ENCODE measurements at regions of chr3 and their contacts with region 1.

Region 1: GRCh38 chr3:46378426-46378942 is 7.7 kb downstream of the CCR5 start:
- DNase-seq: peak; percentile 81
- ATAC-seq: peak; percentile 42
- H3K4me3 Mint-ChIP-seq: no peak overlapping the region
- H3K27ac Mint-ChIP-seq: no peak overlapping the region
- H3K4me1 Mint-ChIP-seq: peaks cover 33% of the 10 kb centered on the region
- H3K27me3 Mint-ChIP-seq: peaks cover 6% of the 10 kb centered on the region
- CTCF ChIP-seq: peak; percentile 90

Region 2: DNA sequence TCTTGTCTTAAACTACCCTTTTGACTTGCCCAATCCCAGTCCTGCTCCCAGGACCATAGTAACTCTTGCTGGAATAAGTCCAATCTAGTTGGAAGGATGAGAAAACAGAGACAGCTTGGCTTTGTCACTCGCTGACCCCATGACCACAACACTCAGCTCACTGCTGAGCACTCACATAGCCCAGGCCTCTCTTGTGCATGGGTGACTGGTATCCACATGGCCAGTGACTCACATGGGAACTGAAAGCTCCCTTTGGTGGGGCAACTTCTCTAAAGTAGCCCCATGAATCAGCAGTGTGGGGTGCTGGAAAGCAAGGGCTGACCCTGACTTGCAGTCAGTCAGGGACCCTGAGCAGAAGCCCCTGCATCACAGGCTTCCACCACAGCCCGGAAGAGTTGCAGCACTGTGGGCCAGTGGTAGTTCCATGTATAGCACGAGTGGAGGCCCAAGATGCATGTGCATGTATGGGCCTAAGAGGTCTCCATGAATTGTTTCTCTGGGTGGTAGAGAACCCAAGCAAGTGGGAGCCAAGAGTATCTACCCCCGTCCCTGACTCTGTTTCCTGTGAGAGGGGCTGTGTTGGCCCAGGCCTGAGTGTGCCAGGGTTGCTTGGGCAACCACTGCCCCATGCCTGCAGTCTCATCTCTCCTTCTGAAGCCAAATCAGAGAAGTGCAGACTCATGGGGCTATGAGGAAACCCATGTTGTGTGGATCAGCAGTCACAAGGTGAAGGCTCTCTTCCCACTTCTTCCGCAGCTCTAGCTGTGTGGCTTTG is 289.1 kb before region 1 on chr3:
- CTCF ChIA-PET with region 1: interaction called, 18 read pairs
- POLR2A ChIA-PET with region 1: no interaction called
- intact Hi-C with region 1: no loop called
- DNase-seq: peak; percentile 55
- ATAC-seq: peak; percentile 76
- H3K4me3 Mint-ChIP-seq: no peak overlapping the region
- H3K27ac Mint-ChIP-seq: no peak overlapping the region
- H3K4me1 Mint-ChIP-seq: peaks cover 20% of the 10 kb centered on the region
- H3K27me3 Mint-ChIP-seq: peaks cover 14% of the 10 kb centered on the region
- CTCF ChIP-seq: no peak

Region 3: GRCh38 chr3:46154311-46154710 is 224.2 kb before region 1 on chr3:
- CTCF ChIA-PET with region 1: no interaction called
- POLR2A ChIA-PET with region 1: no interaction called
- intact Hi-C with region 1: no loop called
- DNase-seq: no peak
- ATAC-seq: no peak
- H3K4me3 Mint-ChIP-seq: no peak overlapping the region
- H3K27ac Mint-ChIP-seq: no peak overlapping the region
- H3K4me1 Mint-ChIP-seq: peaks cover 3% of the 10 kb centered on the region
- H3K27me3 Mint-ChIP-seq: no peaks in the 10 kb centered on the region
- CTCF ChIP-seq: no peak

Region 4: GRCh38 chr3:46208167-46208704 is 170.2 kb before region 1 on chr3 and contains the start of gene CCR1:
- CTCF ChIA-PET with region 1: interaction called, 64 read pairs
- POLR2A ChIA-PET with region 1: no interaction called
- intact Hi-C with region 1: loop called (anchors 5 kb)
- DNase-seq: peak; percentile 92
- ATAC-seq: peak; percentile 78
- H3K4me3 Mint-ChIP-seq: peak within 1 kb of the TSS; percentile 34
- H3K27ac Mint-ChIP-seq: peak within 1 kb of the TSS; percentile 55
- H3K4me1 Mint-ChIP-seq: peaks cover 22% of the 10 kb centered on the region
- H3K27me3 Mint-ChIP-seq: no peaks in the 10 kb centered on the region
- CTCF ChIP-seq: no peak
- total RNA-seq, gene CCR1: 0.67 to 1.1 TPM

Region 5: DNA sequence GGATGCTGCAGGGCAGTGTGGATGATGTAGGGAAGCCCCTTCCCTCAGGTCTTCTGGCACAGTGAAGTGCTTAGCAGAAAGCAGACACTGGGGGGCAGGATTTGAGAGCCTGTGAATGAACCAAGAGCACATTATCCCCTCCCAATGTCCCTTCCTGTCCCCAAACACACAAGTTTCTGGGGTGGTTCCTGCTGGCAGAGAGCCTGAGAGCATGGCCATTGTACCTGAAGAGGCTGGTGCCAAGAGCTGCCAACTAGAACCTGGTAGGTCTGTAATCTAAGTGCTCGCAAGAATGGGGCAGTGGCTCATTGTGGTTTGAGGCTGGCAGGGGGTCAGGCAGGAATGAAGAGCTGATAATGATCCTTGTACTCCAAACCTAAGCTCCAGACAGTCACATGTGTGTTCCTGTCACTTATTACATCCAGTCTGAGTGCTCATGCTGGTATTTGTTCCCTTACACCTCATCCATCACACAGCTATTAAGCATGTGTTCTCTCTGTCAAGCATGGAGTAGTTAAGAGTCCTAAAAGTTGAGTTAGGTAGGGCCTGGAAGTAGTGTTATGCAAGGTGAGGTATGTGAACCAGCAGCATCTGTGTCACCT is 163.6 kb before region 1 on chr3:
- CTCF ChIA-PET with region 1: interaction called, 64 read pairs
- POLR2A ChIA-PET with region 1: no interaction called
- intact Hi-C with region 1: no loop called
- DNase-seq: peak; percentile 51
- ATAC-seq: no peak
- H3K4me3 Mint-ChIP-seq: no peak overlapping the region
- H3K27ac Mint-ChIP-seq: no peak overlapping the region
- H3K4me1 Mint-ChIP-seq: peaks cover 4% of the 10 kb centered on the region
- H3K27me3 Mint-ChIP-seq: no peaks in the 10 kb centered on the region
- CTCF ChIP-seq: peak; percentile 15

Region 6: DNA sequence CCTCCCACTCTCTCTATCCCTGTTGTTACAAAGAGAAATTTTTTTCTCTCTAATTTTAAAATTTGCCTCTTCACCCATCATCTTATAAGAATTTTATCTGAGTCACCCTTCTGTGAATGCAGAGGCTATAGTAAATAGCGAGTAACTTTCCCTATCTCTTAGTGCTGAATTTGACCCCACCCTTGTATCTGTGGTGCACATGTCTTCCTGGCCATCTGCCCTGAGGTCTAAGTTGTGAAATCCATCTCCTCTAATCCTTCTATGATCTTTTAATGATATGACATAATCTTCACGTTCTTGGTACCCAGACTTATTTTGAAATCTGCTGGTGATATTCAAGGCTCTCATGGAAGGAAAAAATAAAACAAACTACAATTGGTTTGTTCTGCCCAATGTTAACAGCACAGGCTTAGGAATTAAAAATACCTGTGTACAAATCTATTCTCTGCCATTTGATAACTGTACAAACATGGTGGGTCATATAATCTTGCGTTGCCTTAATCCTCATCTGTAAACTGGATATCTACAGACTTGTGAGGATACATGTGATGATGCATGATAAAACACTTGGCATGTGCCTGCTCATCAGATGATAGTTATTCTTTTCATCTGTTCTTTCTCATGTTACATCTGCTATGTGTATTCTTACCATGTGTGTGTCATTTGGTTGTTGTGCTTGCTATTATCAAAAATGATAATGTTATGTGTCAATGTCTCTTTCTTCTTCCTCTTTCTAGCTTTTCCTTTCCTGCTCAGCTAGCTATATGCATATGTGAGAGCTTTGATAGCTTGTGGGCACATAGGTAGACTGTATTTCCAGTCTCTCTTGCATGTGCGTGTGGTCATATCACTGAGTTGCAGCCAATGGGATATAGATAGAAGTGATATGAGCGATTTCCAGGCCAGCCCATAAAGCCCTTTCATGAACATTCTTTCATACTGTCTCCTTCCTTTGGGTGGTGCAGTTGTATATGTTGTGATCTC is 149.9 kb before region 1 on chr3:
- CTCF ChIA-PET with region 1: no interaction called
- POLR2A ChIA-PET with region 1: no interaction called
- intact Hi-C with region 1: no loop called
- DNase-seq: no peak
- ATAC-seq: no peak
- H3K4me3 Mint-ChIP-seq: no peak overlapping the region
- H3K27ac Mint-ChIP-seq: no peak overlapping the region
- H3K4me1 Mint-ChIP-seq: peaks cover 8% of the 10 kb centered on the region
- H3K27me3 Mint-ChIP-seq: peaks cover 9% of the 10 kb centered on the region
- CTCF ChIP-seq: no peak

Region 7: GRCh38 chr3:46258525-46258924 is 120.0 kb before region 1 on chr3:
- CTCF ChIA-PET with region 1: no interaction called
- POLR2A ChIA-PET with region 1: no interaction called
- intact Hi-C with region 1: no loop called
- DNase-seq: no peak
- ATAC-seq: no peak
- H3K4me3 Mint-ChIP-seq: no peak overlapping the region
- H3K27ac Mint-ChIP-seq: no peak overlapping the region
- H3K4me1 Mint-ChIP-seq: peaks cover 19% of the 10 kb centered on the region
- H3K27me3 Mint-ChIP-seq: peaks cover 7% of the 10 kb centered on the region
- CTCF ChIP-seq: no peak

Region 8: GRCh38 chr3:46276502-46277099 is 101.9 kb before region 1 on chr3:
- CTCF ChIA-PET with region 1: interaction called, 156 read pairs
- POLR2A ChIA-PET with region 1: no interaction called
- intact Hi-C with region 1: loop called (anchors 5 kb)
- DNase-seq: peak; percentile 86
- ATAC-seq: peak; percentile 81
- H3K4me3 Mint-ChIP-seq: no peak overlapping the region
- H3K27ac Mint-ChIP-seq: no peak overlapping the region
- H3K4me1 Mint-ChIP-seq: peaks cover 41% of the 10 kb centered on the region
- H3K27me3 Mint-ChIP-seq: peaks cover 5% of the 10 kb centered on the region
- CTCF ChIP-seq: peak; percentile 87

Region 9: DNA sequence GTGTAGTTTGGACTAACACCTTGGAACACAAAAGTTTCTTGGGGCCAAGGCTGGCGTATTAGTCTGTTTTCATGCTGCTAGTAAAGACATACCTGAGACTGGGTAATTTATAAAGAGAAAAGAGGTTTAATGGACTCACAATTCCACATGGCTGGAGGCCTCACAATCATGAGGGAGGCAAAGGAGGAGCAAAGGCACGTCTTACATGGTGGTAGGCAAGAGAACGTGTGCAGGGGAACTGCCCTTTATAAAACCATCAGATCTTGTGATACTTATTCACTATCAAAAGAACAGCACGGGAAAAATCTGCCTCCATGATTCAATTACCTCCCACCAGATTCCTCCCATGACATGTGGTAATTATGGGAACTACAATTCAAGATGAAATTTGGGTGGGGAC is 34.0 kb before region 1 on chr3:
- CTCF ChIA-PET with region 1: no interaction called
- POLR2A ChIA-PET with region 1: no interaction called
- intact Hi-C with region 1: no loop called
- DNase-seq: no peak
- ATAC-seq: no peak
- H3K4me3 Mint-ChIP-seq: no peak overlapping the region
- H3K27ac Mint-ChIP-seq: no peak overlapping the region
- H3K4me1 Mint-ChIP-seq: peaks cover 16% of the 10 kb centered on the region
- H3K27me3 Mint-ChIP-seq: no peaks in the 10 kb centered on the region
- CTCF ChIP-seq: no peak

Region 10: GRCh38 chr3:46400000-46400734 is 21.7 kb after region 1 on chr3:
- CTCF ChIA-PET with region 1: interaction called, 14 read pairs
- POLR2A ChIA-PET with region 1: interaction called, 4 read pairs
- intact Hi-C with region 1: no loop called
- DNase-seq: no peak
- ATAC-seq: peak; percentile 27
- H3K4me3 Mint-ChIP-seq: no peak overlapping the region
- H3K27ac Mint-ChIP-seq: no peak overlapping the region
- H3K4me1 Mint-ChIP-seq: peaks cover 10% of the 10 kb centered on the region
- H3K27me3 Mint-ChIP-seq: peaks cover 4% of the 10 kb centered on the region
- CTCF ChIP-seq: no peak

Region 11: GRCh38 chr3:46406788-46407611 is 28.5 kb after region 1 on chr3 and contains the starts of genes CCR5AS and CCRL2:
- CTCF ChIA-PET with region 1: interaction called, 10 read pairs
- POLR2A ChIA-PET with region 1: no interaction called
- intact Hi-C with region 1: no loop called
- DNase-seq: peak; percentile 74
- ATAC-seq: peak; percentile 89
- H3K4me3 Mint-ChIP-seq: peak within 1 kb of the TSS; percentile 82
- H3K27ac Mint-ChIP-seq: peak within 1 kb of the TSS; percentile 89
- H3K4me1 Mint-ChIP-seq: peaks cover 36% of the 10 kb centered on the region
- H3K27me3 Mint-ChIP-seq: no peaks in the 10 kb centered on the region
- CTCF ChIP-seq: peak; percentile 9
- total RNA-seq, gene CCRL2: 2.8 TPM

Measured in activated CD8-positive, alpha-beta T cell treated with anti-CD3 and anti-CD28 coated beads for 36 hours (primary cell).